Activated naive CD4-positive, alpha-beta T cell treated with anti-CD3 and anti-CD28 coated beads for 36 hours (primary cell): ENCODE measurements at regions of chr2 and their contacts with region 1.

Region 1: GRCh38 chr2:60152226-60152833 is 401.1 kb downstream of the BCL11A start:
- DNase-seq: no peak
- H3K4me3 Mint-ChIP-seq: no peak overlapping the region
- H3K27ac Mint-ChIP-seq: no peak overlapping the region
- H3K4me1 Mint-ChIP-seq: no peaks in the 10 kb centered on the region
- H3K27me3 Mint-ChIP-seq: no peaks in the 10 kb centered on the region

Region 2: DNA sequence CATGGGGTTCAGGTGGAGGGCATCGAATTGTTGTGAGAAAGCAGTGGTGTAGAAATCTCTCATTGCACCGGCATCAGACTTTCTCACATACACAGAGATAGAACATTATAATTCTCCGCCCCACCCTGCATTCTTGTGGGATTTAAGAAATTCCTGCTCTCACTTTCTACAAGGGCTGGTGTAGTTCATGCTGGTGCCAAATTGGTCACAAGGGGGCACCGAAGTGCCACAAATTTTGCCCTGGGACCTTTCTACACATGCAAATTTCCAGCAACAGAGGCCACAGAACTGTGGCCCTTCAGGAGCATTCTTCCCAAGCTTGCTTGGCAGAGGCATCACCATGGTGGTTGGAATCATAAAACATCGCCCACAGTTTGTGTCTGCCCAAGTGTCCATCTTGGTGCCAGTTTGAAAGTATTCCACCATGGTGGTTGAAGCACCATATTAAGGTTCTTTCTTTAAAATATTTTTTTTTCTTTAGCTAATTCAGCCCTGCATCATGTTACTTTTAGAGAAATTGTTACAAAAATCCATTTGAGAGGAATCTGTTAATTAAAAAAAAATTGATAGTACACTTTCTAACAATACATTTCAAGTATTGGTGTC is 1390.1 kb before region 1 on chr2:
- CTCF ChIA-PET with region 1: no interaction called
- intact Hi-C with region 1: loop called (anchors 5 kb)
- DNase-seq: peak; percentile 43
- H3K4me3 Mint-ChIP-seq: no peak overlapping the region
- H3K27ac Mint-ChIP-seq: no peak overlapping the region
- H3K4me1 Mint-ChIP-seq: no peaks in the 10 kb centered on the region
- H3K27me3 Mint-ChIP-seq: no peaks in the 10 kb centered on the region

Region 3: GRCh38 chr2:59025157-59025757 is 1127.1 kb before region 1 on chr2:
- CTCF ChIA-PET with region 1: no interaction called
- intact Hi-C with region 1: loop called (anchors 10 kb)
- DNase-seq: peak; percentile 27
- H3K4me3 Mint-ChIP-seq: no peak overlapping the region
- H3K27ac Mint-ChIP-seq: no peak overlapping the region
- H3K4me1 Mint-ChIP-seq: no peaks in the 10 kb centered on the region
- H3K27me3 Mint-ChIP-seq: peaks cover 2% of the 10 kb centered on the region

Region 4: DNA sequence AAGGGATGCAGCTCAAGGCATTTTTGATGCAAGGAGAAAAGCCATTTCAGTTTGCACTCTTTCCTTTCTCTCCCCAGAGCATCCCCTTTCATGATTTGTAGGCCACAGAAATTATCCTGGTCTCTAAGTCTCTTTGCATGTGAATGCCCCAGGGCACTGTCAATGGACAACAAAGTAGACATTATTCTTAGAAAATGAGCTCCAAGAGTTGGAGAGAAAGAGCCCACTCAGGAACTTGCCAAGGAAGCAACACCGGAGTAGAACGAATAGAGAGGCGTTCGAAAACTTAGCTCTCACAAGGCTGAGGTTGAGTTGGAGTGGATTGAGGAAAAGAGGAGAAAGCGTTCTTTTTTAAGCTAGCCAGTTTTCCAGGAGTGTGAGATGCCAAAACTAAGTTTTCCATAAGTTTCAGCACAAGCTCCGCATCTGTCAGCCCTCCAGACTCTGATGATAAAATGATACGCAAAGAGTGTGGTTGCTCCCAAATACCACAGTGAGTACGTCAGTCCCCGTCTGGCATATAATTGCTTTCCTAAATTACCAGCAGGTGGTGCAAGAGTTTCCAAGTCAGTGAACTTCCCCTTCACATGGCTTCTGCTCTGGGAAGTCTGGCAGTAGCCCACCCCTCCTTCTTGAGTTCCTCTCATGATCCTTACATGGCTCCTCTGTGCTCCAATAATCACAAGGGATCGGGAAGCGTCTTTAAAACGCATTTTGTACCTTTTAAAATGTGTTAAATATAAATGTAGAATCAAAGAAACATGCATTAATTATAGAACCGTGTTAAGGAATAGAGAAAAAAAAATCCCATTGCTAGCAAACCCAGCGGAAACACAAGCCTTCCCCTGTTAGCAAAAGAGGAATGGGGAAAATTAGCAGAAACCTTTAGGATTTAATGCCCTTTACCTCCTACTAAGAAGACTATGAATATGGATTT is 850.6 kb before region 1 on chr2:
- CTCF ChIA-PET with region 1: no interaction called
- intact Hi-C with region 1: loop called (anchors 2 kb)
- DNase-seq: peak; percentile 29
- H3K4me3 Mint-ChIP-seq: no peak overlapping the region
- H3K27ac Mint-ChIP-seq: no peak overlapping the region
- H3K4me1 Mint-ChIP-seq: no peaks in the 10 kb centered on the region
- H3K27me3 Mint-ChIP-seq: peaks cover 4% of the 10 kb centered on the region

Region 5: DNA sequence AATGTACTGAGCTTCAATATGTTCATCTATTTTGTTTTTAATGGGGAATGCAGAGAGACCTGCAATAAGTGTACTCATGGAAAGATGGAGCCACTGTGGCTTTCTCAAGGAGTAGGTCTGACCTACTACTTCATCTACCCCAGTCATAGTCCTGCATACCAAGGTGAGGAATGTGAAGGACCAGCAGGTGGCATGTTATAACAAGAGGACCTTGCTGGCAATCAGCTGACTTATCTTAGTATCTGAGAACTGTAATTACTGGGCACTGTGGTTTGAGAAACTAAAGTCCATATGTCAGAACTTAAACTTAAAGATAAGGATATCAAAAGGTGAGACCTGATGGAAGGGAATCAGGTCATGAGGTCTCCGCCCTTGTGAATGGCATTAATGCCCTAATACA is 703.1 kb before region 1 on chr2:
- CTCF ChIA-PET with region 1: no interaction called
- intact Hi-C with region 1: loop called (anchors 10 kb)
- DNase-seq: no peak
- H3K4me3 Mint-ChIP-seq: no peak overlapping the region
- H3K27ac Mint-ChIP-seq: no peak overlapping the region
- H3K4me1 Mint-ChIP-seq: no peaks in the 10 kb centered on the region
- H3K27me3 Mint-ChIP-seq: no peaks in the 10 kb centered on the region